Esophagus squamous epithelium (tissue), 5 donors: ENCODE measurements at regions of chr22 and their contacts with region 1.

Region 1: DNA sequence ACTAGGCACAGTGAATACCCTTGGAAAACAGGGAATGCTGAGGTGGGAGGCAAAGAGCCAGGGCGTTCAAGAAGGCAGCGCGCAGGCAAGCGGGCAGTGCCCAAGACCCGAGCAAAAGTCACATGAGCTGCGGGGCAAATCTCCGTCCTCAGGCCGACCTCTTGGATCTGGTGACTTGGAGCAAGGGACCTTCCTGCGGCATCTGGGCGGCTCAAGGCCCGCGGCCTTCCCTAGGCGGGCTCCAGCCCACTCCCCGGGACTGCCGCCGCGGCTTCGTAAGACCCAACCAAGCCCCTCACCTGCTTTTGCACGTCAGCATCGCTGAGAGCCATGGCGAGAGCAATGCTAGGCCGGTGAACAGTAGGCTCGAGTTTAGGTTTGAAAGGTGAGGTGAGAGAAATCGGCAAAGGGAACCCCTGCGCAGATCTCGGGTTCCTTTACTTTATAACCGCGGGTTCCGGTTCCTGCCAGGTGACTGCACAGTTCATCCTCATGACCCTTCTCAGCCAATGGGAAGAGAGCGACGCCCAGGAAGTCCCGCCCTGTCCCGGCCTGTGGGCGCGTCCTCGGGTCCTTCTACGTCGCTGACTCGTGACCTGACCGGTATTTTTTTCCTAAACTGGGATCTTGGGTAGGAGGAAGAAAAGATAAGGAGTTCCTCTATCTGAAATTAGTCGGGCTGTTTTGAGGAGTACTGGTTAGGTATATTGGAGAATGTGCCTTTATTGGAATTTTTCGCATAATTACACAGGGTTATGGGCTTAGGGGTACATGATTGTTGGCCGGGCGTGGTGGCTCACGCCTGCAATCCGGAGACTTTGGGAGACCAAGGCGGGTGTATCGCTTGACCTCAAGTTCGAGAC is at the start of gene ATP6V1E1:
- DNase-seq: peak; percentile 81
- H3K4me3 ChIP-seq: peak within 1 kb of the TSS; percentile 66 to 96 (median 94)
- H3K27ac ChIP-seq: peak within 1 kb of the TSS; percentile 88 to 98 (median 96)
- H3K4me1 ChIP-seq: peaks cover 10 to 73% (median 13%) of the 10 kb centered on the region in 3 donors
- H3K27me3 ChIP-seq: no peaks in the 10 kb centered on the region
- CTCF ChIP-seq: no peak
- POLR2A ChIP-seq: peak in 3 of 4 donors; percentile 64 to 87 (median 79)
- total RNA-seq, gene ATP6V1E1: 80.9 to 123 (median 99.6) TPM

Region 2: GRCh38 chr22:17095538-17095937 is 533.0 kb before region 1 on chr22:
- intact Hi-C with region 1: no loop called
- DNase-seq: no peak
- H3K4me3 ChIP-seq: no peak overlapping the region
- H3K27ac ChIP-seq: no peak overlapping the region
- H3K4me1 ChIP-seq: peaks cover 0 to 5% (median 0%) of the 10 kb centered on the region in 3 donors
- H3K27me3 ChIP-seq: no peaks in the 10 kb centered on the region
- CTCF ChIP-seq: no peak
- POLR2A ChIP-seq: no peak

Region 3: GRCh38 chr22:17171313-17172171 is 457.0 kb before region 1 on chr22:
- intact Hi-C with region 1: loop called (anchors 10 kb)
- DNase-seq: peak; percentile 42
- H3K4me3 ChIP-seq: peak overlapping the region; percentile 68 to 88 (median 80)
- H3K27ac ChIP-seq: peak overlapping the region; percentile 91 to 96 (median 95)
- H3K4me1 ChIP-seq: peaks cover 3 to 24% (median 4%) of the 10 kb centered on the region in 3 donors
- H3K27me3 ChIP-seq: no peaks in the 10 kb centered on the region
- CTCF ChIP-seq: peak; percentile 67 to 93 (median 89)
- POLR2A ChIP-seq: peak in 2 of 4 donors; percentile 40 to 44

Region 4: DNA sequence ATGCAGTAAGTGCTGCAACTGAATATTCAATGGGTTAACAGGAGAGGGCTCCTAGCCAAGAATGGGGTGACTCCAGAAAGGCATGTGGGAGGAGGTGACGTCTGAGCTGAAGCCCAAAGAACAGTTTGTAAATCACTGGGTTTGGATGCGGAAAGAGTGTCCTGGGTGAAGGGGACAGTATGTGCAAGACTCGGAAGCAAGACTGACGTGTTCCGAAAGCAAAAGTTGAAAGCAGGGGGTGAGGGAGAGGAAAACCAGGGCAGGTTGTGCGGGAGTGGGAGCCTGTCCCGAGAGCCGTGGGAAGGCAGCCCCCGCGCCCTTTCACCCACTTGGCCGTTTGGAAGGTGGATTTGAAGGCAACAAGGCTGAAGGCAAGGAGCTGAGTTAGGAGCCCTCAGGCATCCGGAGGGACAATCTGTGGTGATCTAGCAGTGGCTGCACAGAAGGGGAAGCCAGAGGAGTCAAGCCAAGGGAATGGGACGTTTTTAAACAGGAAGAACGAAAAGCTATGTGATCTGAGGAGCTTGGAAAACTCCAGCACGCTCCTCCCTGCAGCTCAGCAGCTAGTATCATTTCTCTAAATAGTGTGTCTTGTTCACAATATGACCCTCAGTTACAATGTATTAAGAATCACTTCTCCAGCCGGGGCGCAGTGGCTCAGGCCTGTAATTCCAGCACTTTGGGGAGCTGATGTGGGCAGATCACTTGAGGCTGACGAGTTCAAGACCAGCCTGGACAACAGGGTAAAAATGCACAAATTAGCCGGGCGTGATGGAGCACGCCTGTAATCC is 57.5 kb before region 1 on chr22:
- intact Hi-C with region 1: loop called (anchors 10 kb)
- DNase-seq: no peak
- H3K4me3 ChIP-seq: peak overlapping the region in 3 of 4 donors; percentile 18 to 50 (median 31)
- H3K27ac ChIP-seq: peak overlapping the region; percentile 64 to 92 (median 82)
- H3K4me1 ChIP-seq: peaks cover 0 to 39% (median 15%) of the 10 kb centered on the region in 3 donors
- H3K27me3 ChIP-seq: peaks cover 0 to 63% (median 0%) of the 10 kb centered on the region in 4 donors
- CTCF ChIP-seq: no peak
- POLR2A ChIP-seq: peak in 2 of 4 donors; percentile 11 to 34

Region 5: GRCh38 chr22:17785185-17786184 is 156.9 kb after region 1 on chr22:
- intact Hi-C with region 1: no loop called
- DNase-seq: no peak
- H3K4me3 ChIP-seq: no peak overlapping the region
- H3K27ac ChIP-seq: peak overlapping the region in 3 of 4 donors; percentile 7 to 61 (median 28)
- H3K4me1 ChIP-seq: peaks cover 22 to 60% (median 34%) of the 10 kb centered on the region in 3 donors
- H3K27me3 ChIP-seq: peaks cover 0 to 5% (median 0%) of the 10 kb centered on the region in 4 donors
- CTCF ChIP-seq: peak in 5 of 6 experiments; percentile 43 to 67 (median 49)
- POLR2A ChIP-seq: no peak